ENCODE measurements at regions of chr1 and their contacts with region 1.

Region 1: DNA sequence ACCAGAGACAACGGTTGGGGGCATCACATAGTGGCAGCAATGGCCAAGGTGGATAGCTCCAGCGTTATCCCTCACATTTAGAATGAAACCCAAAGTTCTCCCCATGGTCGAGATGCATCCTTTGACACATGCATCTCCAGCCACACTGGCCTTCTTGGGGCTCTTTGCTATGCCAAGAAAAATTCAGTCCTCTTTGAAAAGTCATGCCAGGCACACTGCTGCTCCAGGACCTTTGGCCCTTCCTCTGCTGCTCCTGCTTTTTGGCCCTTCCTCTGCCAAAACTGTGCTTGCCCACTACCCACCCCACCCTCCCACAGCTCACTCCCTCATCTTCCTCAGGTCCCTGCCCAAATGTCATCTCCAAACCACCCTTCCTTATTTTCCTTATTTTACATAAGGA is 106.4 kb downstream of the C1orf94 start:
- DNase-seq: no peak

Region 2: GRCh38 chr1:34050701-34051485 is 232.2 kb before region 1 on chr1:
- intact Hi-C with region 1: loop called in 1 of 2 experiments (anchors 2 kb)
- DNase-seq: no peak